ENCODE measurements at regions of chr2 and their contacts with region 1.

Region 1: GRCh38 chr2:195656859-195657633 is at the start of gene SLC39A10:
- DNase-seq: peak; percentile 98
- ATAC-seq: peak; percentile 90
- H3K4me3 ChIP-seq: peak within 1 kb of the TSS; percentile 78 to 91
- H3K27ac ChIP-seq: peak within 1 kb of the TSS; percentile 94
- H3K4me1 ChIP-seq: peaks cover 23% of the 10 kb centered on the region
- H3K27me3 ChIP-seq: no peaks in the 10 kb centered on the region
- CTCF ChIP-seq: no peak
- total RNA-seq, gene SLC39A10: 45.9 TPM

Region 2: DNA sequence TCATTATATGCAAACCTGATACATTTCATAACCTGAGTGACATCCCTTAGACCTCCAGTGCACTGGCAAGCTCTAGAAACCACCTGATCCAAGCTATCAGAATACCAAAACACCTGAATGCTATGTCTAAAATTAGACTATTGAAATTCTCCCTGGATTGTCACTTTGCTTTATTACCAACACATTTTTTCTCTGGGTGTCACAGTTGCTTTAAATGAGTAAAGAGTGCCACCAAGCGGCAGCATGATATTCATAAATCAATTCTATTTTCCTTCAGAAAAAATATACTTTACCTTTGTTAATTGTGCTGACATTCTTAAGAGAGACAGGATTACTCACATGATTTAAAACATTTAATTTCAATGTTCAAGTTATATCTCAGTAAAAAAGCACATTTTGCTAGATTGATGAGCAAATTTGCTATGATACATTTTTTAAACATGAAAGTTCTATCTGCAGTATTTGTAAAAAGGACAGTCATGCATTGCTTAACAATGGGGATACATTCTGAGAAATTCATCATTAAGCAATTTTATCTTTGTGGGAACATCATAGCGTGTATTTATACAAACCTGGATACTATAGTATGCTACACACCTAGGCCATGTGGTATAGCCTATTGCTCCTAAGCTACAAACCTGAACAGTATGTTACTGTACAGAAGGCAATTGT is 338.5 kb before region 1 on chr2:
- CTCF ChIA-PET with region 1: no interaction called
- POLR2A ChIA-PET with region 1: interaction called, 3 read pairs
- in situ Hi-C with region 1: no loop called
- intact Hi-C with region 1: loop called (anchors 5 kb)
- DNase-seq: no peak
- ATAC-seq: peak; percentile 72
- H3K4me3 ChIP-seq: no peak overlapping the region
- H3K27ac ChIP-seq: peak overlapping the region; percentile 48; the same call in 1 of the 2 replicates
- H3K4me1 ChIP-seq: peaks cover 16% of the 10 kb centered on the region; the same call in 1 of the 2 replicates
- H3K27me3 ChIP-seq: no peaks in the 10 kb centered on the region
- CTCF ChIP-seq: peak; percentile 69; the same call in 1 of the 2 replicates

Region 3: GRCh38 chr2:195543902-195544894 is 112.8 kb before region 1 on chr2:
- CTCF ChIA-PET with region 1: no interaction called
- POLR2A ChIA-PET with region 1: interaction called, 13 read pairs
- in situ Hi-C with region 1: no loop called
- intact Hi-C with region 1: no loop called
- DNase-seq: no peak
- ATAC-seq: peak; percentile 99
- H3K4me3 ChIP-seq: no peak overlapping the region
- H3K27ac ChIP-seq: peak overlapping the region; percentile 45; the same call in 1 of the 2 replicates
- H3K4me1 ChIP-seq: peaks cover 4% of the 10 kb centered on the region; the same call in 1 of the 2 replicates
- H3K27me3 ChIP-seq: no peaks in the 10 kb centered on the region
- CTCF ChIP-seq: no peak

Region 4: GRCh38 chr2:195575879-195576401 is 81.1 kb before region 1 on chr2:
- CTCF ChIA-PET with region 1: interaction called, 3 read pairs
- POLR2A ChIA-PET with region 1: no interaction called
- in situ Hi-C with region 1: no loop called
- intact Hi-C with region 1: loop called (anchors 5 kb)
- DNase-seq: no peak
- ATAC-seq: peak; percentile 82
- H3K4me3 ChIP-seq: no peak overlapping the region
- H3K27ac ChIP-seq: no peak overlapping the region
- H3K4me1 ChIP-seq: 0 out of 2 replicates have a peak, but pooled peaks cover 4% of the 10 kb centered on the region
- H3K27me3 ChIP-seq: no peaks in the 10 kb centered on the region
- CTCF ChIP-seq: peak; percentile 60

Region 5: GRCh38 chr2:196068271-196069209 is 411.5 kb after region 1 on chr2 and contains the start of gene DNAH7:
- CTCF ChIA-PET with region 1: no interaction called
- POLR2A ChIA-PET with region 1: no interaction called
- in situ Hi-C with region 1: no loop called
- intact Hi-C with region 1: loop called (anchors 5 kb)
- DNase-seq: peak; percentile 65
- ATAC-seq: peak; percentile 98
- H3K4me3 ChIP-seq: peak within 1 kb of the TSS; percentile 85 to 86
- H3K27ac ChIP-seq: peak within 1 kb of the TSS; percentile 86
- H3K4me1 ChIP-seq: peaks cover 8% of the 10 kb centered on the region; the same call in 1 of the 2 replicates
- H3K27me3 ChIP-seq: peaks cover 2% of the 10 kb centered on the region; the same call in 1 of the 2 replicates
- CTCF ChIP-seq: peak; percentile 98
- total RNA-seq, gene DNAH7: 0.98 TPM

Region 6: DNA sequence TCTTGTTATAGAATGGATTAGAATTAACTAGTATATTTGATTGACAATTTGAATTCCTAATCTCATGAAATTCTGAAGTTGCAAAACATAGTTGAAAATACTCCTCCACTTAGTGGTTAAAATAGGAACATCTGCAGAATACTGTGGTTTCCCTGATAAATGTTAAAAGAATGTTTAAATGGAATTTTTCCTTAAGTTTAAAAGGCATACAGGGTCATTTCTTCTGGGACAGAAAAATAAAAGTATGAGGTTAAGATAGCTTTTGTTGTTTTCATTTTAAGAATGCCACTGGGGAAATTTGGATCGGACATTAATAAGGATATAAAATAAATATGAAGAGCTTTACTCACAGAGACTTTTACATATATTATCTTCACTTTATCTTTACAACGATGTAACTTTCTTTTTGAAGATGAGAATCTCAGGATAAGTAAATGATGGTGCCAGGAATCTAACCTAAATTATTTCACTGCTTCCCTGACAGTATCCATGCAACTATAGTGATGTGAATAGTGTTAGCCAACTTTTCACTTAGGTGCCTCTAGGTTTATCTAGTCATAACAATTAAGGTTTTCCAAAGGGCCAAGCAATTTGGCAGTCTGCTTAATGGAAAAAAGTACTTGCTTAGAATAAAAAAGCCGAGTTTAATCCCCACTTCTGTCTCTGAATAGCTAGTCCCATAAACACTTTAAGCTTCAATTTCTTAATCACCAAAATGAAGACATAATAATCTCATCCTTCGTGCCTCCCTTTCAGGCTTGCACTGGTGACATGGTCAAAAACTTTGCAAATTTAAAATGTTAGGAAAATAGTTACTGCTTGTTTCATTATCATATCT is 666.1 kb after region 1 on chr2:
- CTCF ChIA-PET with region 1: no interaction called
- POLR2A ChIA-PET with region 1: interaction called, 10 read pairs
- in situ Hi-C with region 1: no loop called
- intact Hi-C with region 1: no loop called
- DNase-seq: no peak
- ATAC-seq: no peak
- H3K4me3 ChIP-seq: no peak overlapping the region
- H3K27ac ChIP-seq: peak overlapping the region; percentile 6; the same call in 1 of the 2 replicates
- H3K4me1 ChIP-seq: no peaks in the 10 kb centered on the region; the same call in 1 of the 2 replicates
- H3K27me3 ChIP-seq: no peaks in the 10 kb centered on the region
- CTCF ChIP-seq: no peak

Region 7: GRCh38 chr2:196390243-196391148 is 733.5 kb after region 1 on chr2:
- CTCF ChIA-PET with region 1: interaction called, 11 read pairs
- POLR2A ChIA-PET with region 1: no interaction called
- in situ Hi-C with region 1: no loop called
- intact Hi-C with region 1: no loop called
- DNase-seq: no peak
- ATAC-seq: no peak
- H3K4me3 ChIP-seq: no peak overlapping the region
- H3K27ac ChIP-seq: no peak overlapping the region
- H3K4me1 ChIP-seq: no peaks in the 10 kb centered on the region
- H3K27me3 ChIP-seq: no peaks in the 10 kb centered on the region
- CTCF ChIP-seq: no peak